HEK293 (cell line): ENCODE measurements at regions of chr11 and their contacts with region 1.

Region 1: GRCh38 chr11:10808553-10809372 is at the start of gene EIF4G2:
- H3K4me3 ChIP-seq: peak within 1 kb of the TSS; percentile 99
- H3K27ac ChIP-seq: peak within 1 kb of the TSS; percentile 90
- H3K4me1 ChIP-seq: no peaks in the 10 kb centered on the region
- CTCF ChIP-seq: peak; percentile 13; the same call in 1 of the 2 replicates

Region 2: GRCh38 chr11:10307442-10308207 is 501.1 kb before region 1 on chr11:
- CTCF ChIA-PET with region 1: no interaction called
- POLR2A ChIA-PET with region 1: interaction called, 13 read pairs
- H3K4me3 ChIP-seq: peak overlapping the region; percentile 48
- H3K27ac ChIP-seq: peak overlapping the region; percentile 86
- H3K4me1 ChIP-seq: no peaks in the 10 kb centered on the region
- CTCF ChIP-seq: peak; percentile 97

Region 3: GRCh38 chr11:10669258-10670033 is 139.3 kb before region 1 on chr11:
- CTCF ChIA-PET with region 1: no interaction called
- POLR2A ChIA-PET with region 1: no interaction called
- H3K4me3 ChIP-seq: no peak overlapping the region
- H3K27ac ChIP-seq: peak overlapping the region; percentile 40; the same call in 1 of the 2 replicates
- H3K4me1 ChIP-seq: no peaks in the 10 kb centered on the region; the same call in 1 of the 2 replicates
- CTCF ChIP-seq: no peak

Region 4: GRCh38 chr11:10693509-10694081 is 115.2 kb before region 1 on chr11 and contains the start of gene IRAG1:
- CTCF ChIA-PET with region 1: no interaction called
- POLR2A ChIA-PET with region 1: no interaction called
- H3K4me3 ChIP-seq: no peak within 1 kb of the TSS
- H3K27ac ChIP-seq: no peak within 1 kb of the TSS
- H3K4me1 ChIP-seq: no peaks in the 10 kb centered on the region
- CTCF ChIP-seq: no peak

Region 5: DNA sequence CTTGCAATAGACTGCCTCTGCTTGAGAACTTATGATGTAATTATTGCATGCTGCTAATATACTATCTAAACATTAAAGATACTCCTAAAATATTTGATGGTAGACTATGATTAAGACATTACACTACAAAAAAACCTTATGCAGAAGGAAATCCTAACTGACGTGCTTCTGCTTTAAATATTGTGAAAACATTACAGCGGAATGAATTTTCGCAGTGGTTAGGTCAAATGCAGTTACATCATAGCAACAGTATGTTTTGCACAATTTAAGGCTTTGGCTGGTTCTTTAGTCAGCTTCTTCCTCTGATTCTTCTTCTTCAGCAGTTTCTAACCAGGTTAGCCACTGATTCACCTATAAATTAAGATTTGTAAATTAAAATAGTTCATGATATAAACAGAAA is 11.2 kb before region 1 on chr11:
- CTCF ChIA-PET with region 1: interaction called, 29 read pairs
- POLR2A ChIA-PET with region 1: interaction called, 95 read pairs
- H3K4me3 ChIP-seq: no peak overlapping the region
- H3K27ac ChIP-seq: no peak overlapping the region
- H3K4me1 ChIP-seq: no peaks in the 10 kb centered on the region
- CTCF ChIP-seq: no peak

Region 6: GRCh38 chr11:10857709-10858438 is 49.1 kb after region 1 on chr11 and contains the start of gene ZBED5:
- CTCF ChIA-PET with region 1: no interaction called
- POLR2A ChIA-PET with region 1: interaction called, 194 read pairs
- H3K4me3 ChIP-seq: peak within 1 kb of the TSS; percentile 90
- H3K27ac ChIP-seq: peak within 1 kb of the TSS; percentile 77
- H3K4me1 ChIP-seq: no peaks in the 10 kb centered on the region
- CTCF ChIP-seq: peak; percentile 70

Region 7: DNA sequence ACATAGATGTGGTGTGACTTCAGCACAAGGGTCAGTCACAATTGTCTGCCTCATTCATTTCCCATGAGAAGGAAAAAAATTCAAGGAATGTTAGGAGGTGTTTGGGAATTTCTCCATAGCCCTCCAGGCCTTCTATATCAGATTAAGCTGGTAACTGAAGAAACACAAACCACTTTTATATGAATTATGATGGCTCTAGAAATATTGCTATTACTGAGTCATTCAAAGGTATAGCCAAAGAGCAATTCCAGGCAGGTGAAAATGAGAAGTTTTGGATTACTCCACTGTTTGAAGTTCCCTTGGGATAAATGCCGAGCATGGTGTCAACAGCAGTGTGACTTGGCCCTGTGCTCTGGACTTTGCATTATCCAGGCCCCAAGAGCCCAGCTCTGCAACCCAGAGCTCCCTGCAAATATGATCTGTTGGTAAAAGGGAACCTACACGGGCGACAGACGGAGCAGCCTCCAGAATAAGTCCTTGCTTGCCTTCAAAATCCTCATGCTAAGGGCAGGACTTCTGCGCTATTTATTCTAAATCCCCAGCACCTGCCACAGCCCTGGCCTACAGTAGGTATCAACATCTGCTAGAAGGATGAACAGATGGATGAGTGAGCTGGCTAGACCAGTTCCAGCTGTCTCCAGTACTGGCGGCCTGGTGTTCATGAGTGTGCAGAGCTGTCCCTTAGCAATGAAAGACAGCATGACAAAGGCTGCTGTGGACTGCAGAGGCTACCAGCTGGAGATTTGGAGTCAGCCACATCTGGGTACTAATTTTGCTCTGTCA is 116.6 kb after region 1 on chr11:
- CTCF ChIA-PET with region 1: interaction called, 3 read pairs
- POLR2A ChIA-PET with region 1: interaction called, 57 read pairs
- H3K4me3 ChIP-seq: no peak overlapping the region
- H3K27ac ChIP-seq: no peak overlapping the region
- H3K4me1 ChIP-seq: no peaks in the 10 kb centered on the region
- CTCF ChIP-seq: no peak

Region 8: DNA sequence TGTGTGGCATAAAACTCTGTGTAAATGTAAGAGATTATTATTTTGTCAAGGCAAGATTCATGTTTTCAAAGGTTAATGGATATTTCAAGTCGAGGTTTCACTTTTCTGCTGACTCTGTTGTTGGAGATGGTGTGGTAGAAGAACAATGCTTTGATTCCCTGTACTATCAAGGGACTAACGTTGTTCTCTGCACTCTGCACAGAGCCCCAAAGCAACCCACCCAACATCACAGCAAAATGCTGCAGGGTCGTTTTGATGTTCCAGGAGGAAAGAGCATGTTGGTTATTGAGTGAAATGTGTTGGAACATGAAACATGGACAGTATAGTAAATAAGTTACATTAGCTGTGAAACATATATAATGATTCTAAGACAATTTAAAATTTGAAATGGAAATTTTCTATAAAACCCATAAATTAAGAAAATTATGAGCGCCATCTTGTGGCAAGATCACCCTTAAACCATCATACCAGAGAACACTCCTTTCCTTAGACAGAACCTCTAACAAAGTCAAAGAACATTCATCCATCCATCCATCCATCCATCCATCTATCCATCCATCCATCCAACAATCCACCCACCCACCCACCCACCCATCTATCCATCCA is 213.5 kb after region 1 on chr11:
- CTCF ChIA-PET with region 1: no interaction called
- POLR2A ChIA-PET with region 1: interaction called, 13 read pairs
- H3K4me3 ChIP-seq: no peak overlapping the region
- H3K27ac ChIP-seq: no peak overlapping the region
- H3K4me1 ChIP-seq: no peaks in the 10 kb centered on the region
- CTCF ChIP-seq: no peak